ENCODE measurements at regions of chr21 and their contacts with region 1.

Region 1: GRCh38 chr21:42939582-42940410 is 14.4 kb upstream of the ERVH48-1 start:
- DNase-seq: peak; percentile 80 to 94 (median 92)
- H3K4me3 ChIP-seq: no peak overlapping the region
- H3K27ac ChIP-seq: peak overlapping the region in 3 of 5 donors; percentile 10 to 67 (median 58)
- H3K4me1 ChIP-seq: peaks cover 0 to 5% of the 10 kb centered on the region in 2 donors
- H3K27me3 ChIP-seq: no peaks in the 10 kb centered on the region
- CTCF ChIP-seq: no peak
- POLR2A ChIP-seq: no peak

Region 2: DNA sequence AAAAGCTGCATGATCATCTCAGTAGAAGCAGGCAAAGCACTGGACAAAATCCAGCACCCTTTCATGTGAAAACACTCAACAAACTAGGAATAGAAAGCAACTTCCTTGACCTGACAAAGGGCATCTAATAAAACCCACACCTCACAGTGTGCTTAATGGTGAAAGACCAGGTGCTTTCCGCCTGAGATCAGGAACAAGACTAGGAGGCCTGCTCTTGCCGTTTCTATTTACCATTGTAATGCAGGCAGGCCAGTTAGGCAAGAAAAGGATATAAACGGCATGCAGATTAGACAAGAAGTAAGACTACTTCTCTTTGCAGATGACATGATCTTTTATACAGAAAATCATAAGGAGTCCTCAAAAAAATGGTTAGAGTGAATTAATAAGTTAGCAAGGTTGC is 389.0 kb before region 1 on chr21:
- intact Hi-C with region 1: no loop called
- DNase-seq: no peak
- H3K4me3 ChIP-seq: no peak overlapping the region
- H3K27ac ChIP-seq: no peak overlapping the region
- H3K4me1 ChIP-seq: no peaks in the 10 kb centered on the region
- H3K27me3 ChIP-seq: no peaks in the 10 kb centered on the region
- CTCF ChIP-seq: no peak
- POLR2A ChIP-seq: no peak

Region 3: DNA sequence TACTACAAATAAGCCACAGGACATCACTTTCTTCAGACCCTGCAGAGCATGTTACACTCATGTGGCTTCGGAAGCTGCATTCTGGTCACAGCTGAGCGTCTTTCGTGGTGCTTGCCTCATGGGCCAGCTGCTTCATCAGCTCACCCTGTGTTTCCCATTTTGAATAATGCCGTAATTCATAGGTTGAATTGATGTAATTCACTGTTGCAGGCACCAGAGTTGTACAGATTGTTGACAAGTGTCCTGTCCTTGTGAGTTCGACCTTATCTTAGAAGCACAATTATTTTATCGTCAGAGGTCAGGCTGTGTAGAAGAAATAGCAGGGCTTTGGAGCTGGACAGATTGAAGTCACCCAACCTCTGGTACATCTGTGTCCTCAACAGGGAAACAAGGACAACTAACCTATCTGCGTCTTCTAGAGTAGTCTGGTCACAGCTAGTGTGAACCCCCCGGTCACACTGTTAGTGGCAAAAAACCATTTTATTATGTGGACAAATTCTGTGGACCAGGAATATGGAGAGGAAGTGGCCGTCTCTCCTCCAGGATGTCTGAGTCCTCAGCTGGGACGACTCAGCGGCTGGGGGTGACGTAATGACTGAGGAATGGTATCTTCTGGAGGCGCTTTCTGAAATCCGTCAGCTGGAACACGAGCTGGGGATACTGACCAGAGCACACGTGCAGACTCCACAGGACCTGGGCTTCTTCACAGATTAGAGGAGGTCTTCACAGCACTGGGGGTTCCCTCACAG is 52.4 kb after region 1 on chr21:
- intact Hi-C with region 1: loop called in 1 of 2 experiments (anchors 10 kb)
- DNase-seq: peak in 5 of 7 donors; percentile 34 to 72 (median 48)
- H3K4me3 ChIP-seq: no peak overlapping the region
- H3K27ac ChIP-seq: peak overlapping the region in 2 of 5 donors; percentile 38 to 44
- H3K4me1 ChIP-seq: peaks cover 0 to 4% of the 10 kb centered on the region in 2 donors
- H3K27me3 ChIP-seq: no peaks in the 10 kb centered on the region
- CTCF ChIP-seq: no peak
- POLR2A ChIP-seq: no peak

Measured in adrenal gland (tissue), 19 donors.